Right ventricle myocardium inferior (tissue), 1 donor: ENCODE measurements at regions of chr10 and their contacts with region 1.

Region 1: GRCh38 chr10:114234132-114234531 is 4.9 kb upstream of the VWA2 start:
- DNase-seq: no peak
- ATAC-seq: peak; percentile 70

Region 2: GRCh38 chr10:114142018-114142417 is 92.1 kb before region 1 on chr10:
- intact Hi-C with region 1: loop called (anchors 5 kb)
- DNase-seq: no peak
- ATAC-seq: peak; percentile 86